ENCODE measurements at regions of chr2 and their contacts with region 1.

Region 1: DNA sequence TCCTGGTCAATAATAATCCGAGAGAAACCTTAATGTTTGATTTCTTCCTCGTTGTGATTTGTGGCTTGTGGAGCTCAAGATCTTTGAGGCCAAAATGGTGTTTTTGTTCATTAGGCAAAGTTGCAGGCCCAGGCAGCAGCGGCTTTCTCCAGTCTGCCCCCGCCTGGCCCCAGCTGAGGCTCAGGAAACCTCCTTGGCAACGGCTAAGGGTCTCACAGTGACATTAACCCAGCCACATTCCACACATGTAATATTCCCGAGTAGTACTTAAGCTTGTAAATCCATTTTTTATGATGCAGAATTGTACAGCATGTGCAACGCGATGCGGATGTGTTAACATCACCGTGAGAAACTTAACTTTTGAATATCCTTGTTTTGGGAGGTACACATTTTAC is 200.1 kb downstream of the BCL11A start:
- DNase-seq: peak; percentile 78
- H3K4me3 ChIP-seq: peak overlapping the region; percentile 61
- H3K27ac ChIP-seq: peak overlapping the region; percentile 98
- H3K4me1 ChIP-seq: peaks cover 97% of the 10 kb centered on the region
- CTCF ChIP-seq: peak; percentile 56

Region 2: DNA sequence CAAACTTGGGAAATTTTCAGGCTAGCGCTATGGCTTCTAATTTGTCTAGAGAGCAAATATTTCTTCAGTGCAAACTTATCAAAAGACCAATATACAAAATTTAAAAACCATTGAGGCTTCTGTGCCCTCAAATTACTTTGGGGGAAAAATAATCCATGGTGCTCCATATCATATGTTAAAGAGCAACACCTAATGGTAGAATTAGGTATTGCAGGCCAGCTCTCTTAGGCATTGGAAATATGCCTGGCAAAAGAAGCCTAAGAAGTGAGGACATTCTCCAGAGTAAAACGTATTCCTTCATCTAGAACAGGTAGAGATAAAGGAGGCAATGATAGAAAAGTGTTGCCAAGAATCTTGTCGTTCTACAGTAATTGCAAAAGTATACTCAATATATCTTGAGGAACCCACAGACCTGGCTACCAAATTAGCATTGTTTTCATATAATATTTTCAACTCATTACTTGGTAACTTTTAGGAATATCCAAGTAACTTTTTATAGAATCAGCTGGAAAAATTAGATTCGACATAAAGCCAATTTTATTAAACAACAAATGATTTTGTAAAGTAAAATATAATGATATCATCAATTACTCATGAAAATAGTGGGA is 201.1 kb before region 1 on chr2:
- CTCF ChIA-PET with region 1: no interaction called
- POLR2A ChIA-PET with region 1: no interaction called
- intact Hi-C with region 1: loop called (anchors 2 kb)
- DNase-seq: peak; percentile 61
- H3K4me3 ChIP-seq: no peak overlapping the region
- H3K27ac ChIP-seq: no peak overlapping the region
- H3K4me1 ChIP-seq: no peaks in the 10 kb centered on the region
- CTCF ChIP-seq: peak; percentile 96

Region 3: DNA sequence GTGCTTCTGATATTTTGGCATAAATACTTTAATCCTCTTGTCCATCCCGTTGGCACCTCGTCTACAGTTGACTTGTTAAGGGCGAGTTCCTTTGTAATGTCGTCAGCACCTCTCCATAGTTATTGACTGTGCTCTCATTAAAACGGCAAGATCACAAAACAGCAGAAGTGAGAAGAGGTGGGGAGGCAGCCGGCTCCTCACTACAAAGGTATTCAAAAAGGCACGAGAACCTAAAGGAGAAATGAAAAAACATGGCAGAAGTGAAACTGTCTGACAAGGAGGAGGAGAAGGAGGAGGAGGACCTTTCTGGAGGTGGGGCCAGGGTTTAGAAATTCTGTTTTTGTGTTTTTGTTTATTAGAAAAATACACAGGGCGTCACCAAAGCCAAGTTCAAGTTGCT is 35.6 kb before region 1 on chr2:
- CTCF ChIA-PET with region 1: interaction called, 5 read pairs
- POLR2A ChIA-PET with region 1: interaction called, 80 read pairs
- intact Hi-C with region 1: loop called (anchors 1 kb)
- DNase-seq: peak; percentile 92
- H3K4me3 ChIP-seq: peak overlapping the region; percentile 47
- H3K27ac ChIP-seq: peak overlapping the region; percentile 92
- H3K4me1 ChIP-seq: peaks cover 86% of the 10 kb centered on the region
- CTCF ChIP-seq: no peak

Region 4: GRCh38 chr2:60366135-60366712 is 12.8 kb after region 1 on chr2:
- CTCF ChIA-PET with region 1: interaction called, 12 read pairs
- POLR2A ChIA-PET with region 1: interaction called, 99 read pairs
- intact Hi-C with region 1: loop called (anchors 1 kb)
- DNase-seq: peak; percentile 89
- H3K4me3 ChIP-seq: peak overlapping the region; percentile 35
- H3K27ac ChIP-seq: peak overlapping the region; percentile 85
- H3K4me1 ChIP-seq: peaks cover 100% of the 10 kb centered on the region
- CTCF ChIP-seq: no peak

Region 5: DNA sequence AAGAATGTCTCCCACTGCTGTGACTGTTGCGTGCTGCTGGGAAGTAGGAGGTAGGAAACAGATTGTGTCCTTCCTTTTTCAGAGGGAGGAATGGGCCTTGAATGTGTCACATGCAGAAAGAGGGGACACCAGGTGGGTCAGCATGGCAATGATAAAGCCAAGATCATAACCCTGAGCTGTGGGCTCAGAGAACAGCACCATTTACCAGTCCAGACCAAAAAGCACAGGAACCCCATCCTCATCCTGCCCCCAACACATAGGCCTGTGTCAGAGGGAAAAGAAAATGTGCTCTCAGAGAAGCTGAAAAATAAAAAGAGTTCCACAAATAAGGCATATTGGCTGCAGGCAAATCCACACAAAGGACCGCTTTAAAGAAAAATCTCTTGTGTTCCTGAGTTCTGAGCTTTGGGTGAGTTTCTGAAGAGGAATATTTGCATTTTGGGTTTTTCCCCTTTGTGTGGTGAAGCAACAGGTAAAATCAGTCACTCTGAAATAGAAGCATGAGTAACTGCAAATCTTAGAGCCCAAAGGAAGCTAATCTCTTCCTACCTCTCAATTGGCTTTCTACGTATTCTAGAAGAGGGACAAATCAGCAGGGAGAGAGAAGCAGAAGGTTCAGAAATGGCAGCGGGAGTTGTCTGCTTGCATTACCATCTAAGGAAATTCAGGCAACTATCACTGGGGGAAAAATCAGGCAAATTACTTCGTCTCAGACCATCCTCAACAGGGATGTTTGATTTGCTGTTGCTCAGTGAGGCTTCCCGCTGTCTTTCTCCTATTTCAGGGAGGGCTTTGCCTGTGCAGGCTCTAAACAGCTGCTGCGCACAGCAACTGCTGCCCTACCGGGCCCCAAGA is 93.2 kb after region 1 on chr2:
- CTCF ChIA-PET with region 1: no interaction called
- POLR2A ChIA-PET with region 1: interaction called, 34 read pairs
- intact Hi-C with region 1: loop called (anchors 1 kb)
- DNase-seq: peak; percentile 72
- H3K4me3 ChIP-seq: peak overlapping the region; percentile 36
- H3K27ac ChIP-seq: peak overlapping the region; percentile 80
- H3K4me1 ChIP-seq: peaks cover 73% of the 10 kb centered on the region
- CTCF ChIP-seq: no peak

Region 6: GRCh38 chr2:60544062-60544461 is 190.7 kb after region 1 on chr2:
- CTCF ChIA-PET with region 1: no interaction called
- POLR2A ChIA-PET with region 1: interaction called, 31 read pairs
- intact Hi-C with region 1: no loop called
- DNase-seq: no peak
- H3K4me3 ChIP-seq: peak overlapping the region; percentile 93
- H3K27ac ChIP-seq: peak overlapping the region; percentile 90
- H3K4me1 ChIP-seq: peaks cover 81% of the 10 kb centered on the region
- CTCF ChIP-seq: no peak

Region 7: DNA sequence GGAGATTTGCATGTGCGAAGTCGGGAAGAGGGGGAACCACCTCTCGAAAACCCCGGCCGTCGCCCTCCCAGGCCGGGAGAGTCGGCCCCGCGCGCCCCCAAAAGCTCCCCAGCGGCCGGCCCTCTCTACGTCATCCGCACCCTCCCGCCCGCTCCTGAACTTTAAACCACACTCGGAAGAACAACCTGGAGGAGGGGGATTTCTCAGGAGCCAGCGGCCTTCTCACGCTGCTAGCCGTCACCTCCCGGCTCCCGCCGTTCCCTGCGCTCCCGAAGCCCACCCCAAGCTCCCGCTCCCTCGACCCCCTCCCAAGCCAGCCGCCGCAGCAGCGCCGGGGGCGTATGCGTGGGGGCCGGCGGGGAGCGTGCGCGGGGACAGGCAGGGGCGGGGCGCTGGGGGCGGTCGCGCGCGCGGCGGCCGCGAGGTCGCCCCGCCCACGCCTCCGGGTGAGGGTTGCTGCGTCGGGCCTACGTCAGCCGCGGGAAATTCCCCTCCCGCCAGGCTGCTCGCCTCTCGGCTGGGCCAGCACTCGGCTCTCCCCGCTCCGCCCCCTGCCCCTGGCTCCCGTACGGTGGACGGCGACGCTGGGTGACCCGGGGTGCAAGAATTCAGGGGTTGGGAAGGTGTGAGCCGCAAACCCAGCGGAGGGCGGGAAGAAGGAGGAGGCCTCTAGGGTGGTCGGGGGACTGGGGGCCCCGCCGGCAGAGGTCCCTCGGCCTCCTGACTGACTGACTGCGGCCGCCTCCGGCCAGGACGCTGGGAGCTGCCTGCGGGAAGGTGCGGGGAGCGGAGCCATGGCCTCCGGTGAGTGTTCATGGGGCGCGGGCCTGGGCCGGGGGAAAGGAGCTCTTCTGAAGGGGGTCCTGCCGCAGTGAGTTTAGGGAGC is 527.9 kb after region 1 on chr2 and contains the start of gene REL:
- CTCF ChIA-PET with region 1: no interaction called
- POLR2A ChIA-PET with region 1: no interaction called
- intact Hi-C with region 1: loop called (anchors 5 kb)
- DNase-seq: peak; percentile 93
- H3K4me3 ChIP-seq: peak within 1 kb of the TSS; percentile 88
- H3K27ac ChIP-seq: peak within 1 kb of the TSS; percentile 84
- H3K4me1 ChIP-seq: peaks cover 24% of the 10 kb centered on the region
- CTCF ChIP-seq: 0 out of 2 replicates have a peak, but pooled peaks have one; percentile 50
- total RNA-seq, gene REL: 49.9 and 50.2 TPM in 2 replicates